GM10248 (cell line): ENCODE measurements at regions of chr16 and their contacts with region 1.

Region 1: DNA sequence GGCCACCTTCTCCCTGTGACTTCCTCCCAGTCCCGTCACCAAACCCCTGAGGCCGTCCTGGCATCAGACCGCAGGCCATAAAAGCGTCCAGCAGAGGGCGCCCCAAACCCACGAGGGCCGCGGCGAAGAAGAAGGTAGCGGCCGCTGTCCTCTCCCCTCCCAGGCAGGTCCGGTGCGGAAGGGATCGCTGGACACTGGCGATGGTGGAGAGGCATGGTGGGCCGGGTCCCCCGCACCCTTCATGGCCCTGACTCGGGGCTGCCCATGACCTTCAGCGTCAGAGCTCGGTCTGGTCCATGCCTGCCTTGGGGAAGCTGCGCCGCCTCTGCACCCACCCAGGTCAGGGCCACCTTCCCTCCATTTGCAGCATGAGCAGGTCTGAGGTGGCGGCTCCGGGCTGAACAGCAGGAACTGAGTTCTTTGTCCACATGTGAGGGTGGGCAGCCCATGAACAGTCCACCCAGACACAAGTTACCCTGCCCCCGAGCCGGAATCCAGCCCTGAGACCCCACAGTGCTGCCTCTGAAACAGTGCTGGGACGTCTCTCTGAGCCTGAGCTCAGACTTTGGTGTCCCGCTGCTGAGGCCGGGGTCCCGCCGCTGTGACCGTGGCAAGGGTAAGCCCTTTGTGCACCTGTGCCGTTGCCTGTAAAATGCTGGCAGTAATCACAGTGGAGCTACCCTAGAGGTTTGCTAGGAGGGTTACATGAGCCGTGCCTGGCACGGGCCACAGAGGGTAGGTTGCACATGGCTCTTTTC is 40.8 kb upstream of the CMIP start:
- DNase-seq: peak; percentile 92
- CTCF ChIP-seq: peak; percentile 97

Region 2: GRCh38 chr16:80627108-80627507 is 776.7 kb before region 1 on chr16:
- CTCF ChIA-PET with region 1: no interaction called
- POLR2A ChIA-PET with region 1: no interaction called
- DNase-seq: peak; percentile 70
- CTCF ChIP-seq: no peak

Region 3: GRCh38 chr16:81251871-81252270 is 151.9 kb before region 1 on chr16:
- CTCF ChIA-PET with region 1: no interaction called
- POLR2A ChIA-PET with region 1: no interaction called
- DNase-seq: no peak
- CTCF ChIP-seq: no peak

Region 4: GRCh38 chr16:81419806-81420205 is 16.0 kb after region 1 on chr16:
- CTCF ChIA-PET with region 1: interaction called, 12 read pairs
- POLR2A ChIA-PET with region 1: no interaction called
- DNase-seq: no peak
- CTCF ChIP-seq: no peak

Region 5: GRCh38 chr16:81696961-81697615 is 293.3 kb after region 1 on chr16:
- CTCF ChIA-PET with region 1: interaction called, 16 read pairs
- POLR2A ChIA-PET with region 1: no interaction called
- DNase-seq: peak; percentile 73
- CTCF ChIP-seq: peak; percentile 75

Region 6: DNA sequence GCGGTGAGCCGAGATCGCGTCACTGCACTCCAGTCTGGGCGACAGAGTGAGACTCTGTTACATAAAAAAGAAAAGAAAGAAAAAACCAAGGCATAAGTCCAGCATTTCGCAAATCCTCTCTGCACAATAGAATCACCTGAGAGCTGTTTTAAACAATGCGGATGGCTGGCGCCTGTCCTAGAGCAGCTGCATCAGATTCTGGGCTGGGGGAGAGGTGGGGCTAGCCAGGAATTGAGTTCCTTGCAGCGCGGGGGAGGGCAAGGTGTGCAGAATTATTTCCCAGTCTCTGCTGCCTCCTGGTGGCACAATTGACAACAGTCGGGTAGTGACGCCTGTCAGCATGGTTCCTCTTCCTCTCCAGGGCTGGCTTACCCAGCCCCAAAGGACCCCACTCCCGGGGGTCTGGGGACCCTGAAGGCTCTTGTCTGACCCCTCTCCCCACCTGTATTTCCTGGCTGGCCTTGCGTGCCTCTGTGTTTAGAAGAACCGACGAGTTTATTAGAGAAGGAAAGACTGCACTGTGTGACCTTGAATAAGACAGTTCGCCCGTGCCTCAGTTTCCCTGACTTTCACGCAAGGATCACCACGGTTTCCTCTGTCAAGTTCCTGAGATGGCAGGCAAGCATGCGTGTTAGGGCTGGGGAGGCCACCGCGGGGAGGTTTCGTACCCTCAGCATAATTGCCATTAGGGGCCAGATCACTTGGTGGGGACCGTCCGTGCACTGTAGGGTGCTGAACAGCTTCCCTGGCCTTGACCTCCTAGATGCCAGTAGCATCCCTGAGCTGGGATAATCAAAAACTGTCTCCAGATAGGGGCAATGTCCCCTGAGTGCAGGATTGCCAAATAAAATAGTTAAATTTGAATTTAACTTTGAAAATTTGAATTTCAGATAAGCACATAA is 334.3 kb after region 1 on chr16:
- CTCF ChIA-PET with region 1: interaction called, 12 read pairs
- POLR2A ChIA-PET with region 1: no interaction called
- DNase-seq: peak; percentile 87
- CTCF ChIP-seq: peak; percentile 91